AG04450 (cell line): ENCODE measurements at regions of chr10 and their contacts with region 1.

Region 1: GRCh38 chr10:70925377-70926225 is 37.2 kb upstream of the PCBD1 start:
- DNase-seq: no peak
- H3K4me3 ChIP-seq: no peak overlapping the region
- H3K27ac ChIP-seq: no peak overlapping the region
- H3K27me3 ChIP-seq: peaks cover 34% of the 10 kb centered on the region
- CTCF ChIP-seq: peak; percentile 91

Region 2: GRCh38 chr10:71205468-71205867 is 279.9 kb after region 1 on chr10:
- CTCF ChIA-PET with region 1: interaction called, 27 read pairs
- POLR2A ChIA-PET with region 1: interaction called, 4 read pairs
- DNase-seq: no peak
- H3K4me3 ChIP-seq: no peak overlapping the region
- H3K27ac ChIP-seq: no peak overlapping the region
- H3K27me3 ChIP-seq: peaks cover 30% of the 10 kb centered on the region
- CTCF ChIP-seq: no peak

Region 3: DNA sequence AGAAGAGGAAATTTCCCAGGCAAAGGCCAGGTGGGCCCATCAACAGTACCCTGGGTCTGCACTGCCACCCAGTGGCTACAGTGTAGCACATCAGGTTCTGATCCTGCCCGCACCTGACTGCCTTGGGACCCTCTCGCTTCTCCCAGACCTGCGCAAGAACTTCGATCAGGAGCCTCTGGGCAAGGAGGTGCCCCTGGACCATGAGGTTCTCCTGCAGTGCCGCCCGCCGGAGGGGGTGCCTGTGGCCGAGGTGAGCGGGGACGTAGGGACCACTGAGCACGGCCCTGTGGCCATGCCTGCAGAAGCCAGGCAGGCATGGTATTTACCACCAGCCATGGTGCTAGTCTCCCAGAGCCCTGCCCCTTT is 359.6 kb after region 1 on chr10:
- CTCF ChIA-PET with region 1: interaction called, 38 read pairs
- POLR2A ChIA-PET with region 1: no interaction called
- DNase-seq: no peak
- H3K4me3 ChIP-seq: no peak overlapping the region
- H3K27ac ChIP-seq: no peak overlapping the region
- H3K27me3 ChIP-seq: no peaks in the 10 kb centered on the region
- CTCF ChIP-seq: peak; percentile 79